ENCODE measurements at regions of chr20 and their contacts with region 1.

Region 1: DNA sequence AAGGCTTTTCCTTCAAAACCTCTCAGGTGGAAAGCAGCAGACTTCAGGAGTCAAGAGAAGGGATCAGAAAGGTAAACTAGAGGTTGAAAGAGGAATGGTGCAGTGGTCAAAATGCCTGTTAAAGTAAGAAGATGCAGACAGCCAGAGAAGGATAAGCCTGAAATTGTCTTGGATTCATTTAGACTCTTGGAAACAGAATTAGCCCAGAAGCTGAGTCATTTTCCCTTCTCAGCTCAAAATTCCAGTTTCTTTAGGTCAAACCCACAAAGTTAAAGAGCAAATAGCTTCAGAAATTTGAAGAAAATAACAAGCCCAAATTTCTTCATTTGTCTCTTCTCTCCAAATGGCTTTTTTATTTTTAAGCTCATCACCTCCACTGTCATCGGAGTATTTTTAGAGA is 73.9 kb downstream of the DHX35 start:
- DNase-seq: no peak
- ATAC-seq: no peak
- H3K4me3 Mint-ChIP-seq: no peak overlapping the region
- H3K27ac Mint-ChIP-seq: no peak overlapping the region
- H3K4me1 Mint-ChIP-seq: peaks cover 3% of the 10 kb centered on the region
- H3K27me3 Mint-ChIP-seq: no peaks in the 10 kb centered on the region

Region 2: GRCh38 chr20:38645980-38646858 is 389.8 kb before region 1 on chr20:
- POLR2A ChIA-PET with region 1: interaction called, 13 read pairs
- DNase-seq: peak; percentile 96
- ATAC-seq: peak; percentile 93
- H3K4me3 Mint-ChIP-seq: peak overlapping the region; percentile 82
- H3K27ac Mint-ChIP-seq: peak overlapping the region; percentile 47
- H3K4me1 Mint-ChIP-seq: peaks cover 9% of the 10 kb centered on the region
- H3K27me3 Mint-ChIP-seq: peaks cover 47% of the 10 kb centered on the region

Measured in activated naive CD8-positive, alpha-beta T cell treated with anti-CD3 and anti-CD28 coated beads, Interleukin-2, amount 10 ng/mL, durations not matched to agents 7 days and 5 days (primary cell).